ENCODE measurements at regions of chr22 and their contacts with region 1.

Region 1: GRCh38 chr22:28112548-28113043 is 193.5 kb upstream of the PITPNB start:
- DNase-seq: peak; percentile 31
- H3K4me3 ChIP-seq: no peak overlapping the region
- H3K27ac ChIP-seq: no peak overlapping the region
- H3K4me1 ChIP-seq: no peaks in the 10 kb centered on the region
- H3K27me3 ChIP-seq: no peaks in the 10 kb centered on the region
- CTCF ChIP-seq: peak; percentile 38 to 42
- POLR2A ChIP-seq: no peak

Region 2: DNA sequence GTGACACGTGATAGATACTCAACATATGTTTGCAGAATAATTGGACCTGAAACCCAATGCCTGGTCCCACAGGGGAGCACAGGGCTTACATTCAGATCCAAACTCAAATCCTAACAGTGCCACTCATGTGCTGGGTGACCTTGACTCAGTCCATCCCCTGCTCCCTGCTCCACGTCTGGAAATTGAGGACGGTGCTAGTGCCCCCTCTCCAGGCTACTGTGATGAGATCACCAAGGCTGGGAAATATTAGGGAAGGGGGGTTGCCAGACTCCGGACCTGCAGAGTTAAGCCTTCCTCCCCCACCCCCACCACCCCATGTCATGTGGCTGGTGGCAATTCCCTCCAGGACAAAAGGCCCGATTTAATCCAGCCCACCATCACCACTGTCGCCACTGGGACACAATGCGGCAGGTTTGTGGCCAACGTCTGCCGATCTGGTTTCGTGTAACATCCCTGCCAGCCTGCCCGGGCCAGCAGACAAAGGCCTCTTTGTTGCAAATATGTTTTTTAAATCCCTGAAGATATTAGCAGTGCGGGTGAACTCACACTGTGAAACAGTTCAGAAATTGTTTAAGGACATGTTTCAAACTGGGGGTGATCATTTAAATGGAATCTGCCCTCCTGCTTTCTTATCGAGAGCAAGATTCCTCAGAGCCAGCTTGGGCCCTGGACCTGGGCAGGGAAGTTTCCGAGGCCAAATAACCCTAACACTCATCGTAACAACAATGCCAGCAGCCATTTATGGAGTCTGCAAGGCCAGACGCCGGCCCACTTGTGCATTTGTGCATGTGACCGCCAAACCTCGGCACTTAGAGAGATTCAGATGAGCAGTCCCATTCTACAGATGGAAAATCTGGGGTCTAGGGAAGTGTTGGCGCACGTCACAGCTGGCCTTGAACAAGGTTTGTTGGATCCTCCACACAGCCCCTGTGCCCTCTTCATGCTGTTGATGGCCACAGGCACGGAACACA is 291.4 kb before region 1 on chr22:
- CTCF ChIA-PET with region 1: no interaction called
- POLR2A ChIA-PET with region 1: no interaction called
- dilution Hi-C with region 1: no loop called
- intact Hi-C with region 1: no loop called
- DNase-seq: no peak
- H3K4me3 ChIP-seq: no peak overlapping the region
- H3K27ac ChIP-seq: no peak overlapping the region
- H3K4me1 ChIP-seq: no peaks in the 10 kb centered on the region
- H3K27me3 ChIP-seq: no peaks in the 10 kb centered on the region
- CTCF ChIP-seq: no peak
- POLR2A ChIP-seq: no peak

Region 3: GRCh38 chr22:28019881-28020871 is 92.4 kb before region 1 on chr22:
- CTCF ChIA-PET with region 1: interaction called, 27 read pairs
- POLR2A ChIA-PET with region 1: no interaction called
- dilution Hi-C with region 1: no loop called
- intact Hi-C with region 1: loop called (anchors 10 kb)
- DNase-seq: peak; percentile 52
- H3K4me3 ChIP-seq: no peak overlapping the region
- H3K27ac ChIP-seq: no peak overlapping the region
- H3K4me1 ChIP-seq: peaks cover 9% of the 10 kb centered on the region
- H3K27me3 ChIP-seq: no peaks in the 10 kb centered on the region
- CTCF ChIP-seq: peak; percentile 95 to 98
- POLR2A ChIP-seq: no peak

Region 4: DNA sequence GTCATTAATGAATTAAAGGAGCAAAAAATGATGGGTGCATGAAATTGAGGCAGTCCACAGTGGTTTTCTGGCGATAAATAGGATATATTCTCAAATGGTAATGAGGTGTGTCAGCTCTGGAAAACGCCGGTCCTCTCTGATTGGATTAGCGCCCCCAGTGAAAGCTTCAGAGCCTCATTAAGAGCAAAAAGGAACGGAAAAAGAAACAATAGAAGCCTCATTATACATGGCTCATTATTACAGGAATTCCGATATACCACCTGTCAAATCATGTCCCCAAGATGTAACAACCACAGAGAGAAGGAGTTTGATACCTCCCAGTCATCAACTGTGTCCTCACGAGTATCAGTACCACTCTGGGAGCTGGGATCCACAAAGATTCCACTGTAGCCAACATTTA is 17.8 kb before region 1 on chr22:
- CTCF ChIA-PET with region 1: interaction called, 20 read pairs
- POLR2A ChIA-PET with region 1: no interaction called
- dilution Hi-C with region 1: no loop called
- intact Hi-C with region 1: no loop called
- DNase-seq: no peak
- H3K4me3 ChIP-seq: no peak overlapping the region
- H3K27ac ChIP-seq: no peak overlapping the region
- H3K4me1 ChIP-seq: no peaks in the 10 kb centered on the region
- H3K27me3 ChIP-seq: no peaks in the 10 kb centered on the region
- CTCF ChIP-seq: no peak
- POLR2A ChIP-seq: no peak

Region 5: DNA sequence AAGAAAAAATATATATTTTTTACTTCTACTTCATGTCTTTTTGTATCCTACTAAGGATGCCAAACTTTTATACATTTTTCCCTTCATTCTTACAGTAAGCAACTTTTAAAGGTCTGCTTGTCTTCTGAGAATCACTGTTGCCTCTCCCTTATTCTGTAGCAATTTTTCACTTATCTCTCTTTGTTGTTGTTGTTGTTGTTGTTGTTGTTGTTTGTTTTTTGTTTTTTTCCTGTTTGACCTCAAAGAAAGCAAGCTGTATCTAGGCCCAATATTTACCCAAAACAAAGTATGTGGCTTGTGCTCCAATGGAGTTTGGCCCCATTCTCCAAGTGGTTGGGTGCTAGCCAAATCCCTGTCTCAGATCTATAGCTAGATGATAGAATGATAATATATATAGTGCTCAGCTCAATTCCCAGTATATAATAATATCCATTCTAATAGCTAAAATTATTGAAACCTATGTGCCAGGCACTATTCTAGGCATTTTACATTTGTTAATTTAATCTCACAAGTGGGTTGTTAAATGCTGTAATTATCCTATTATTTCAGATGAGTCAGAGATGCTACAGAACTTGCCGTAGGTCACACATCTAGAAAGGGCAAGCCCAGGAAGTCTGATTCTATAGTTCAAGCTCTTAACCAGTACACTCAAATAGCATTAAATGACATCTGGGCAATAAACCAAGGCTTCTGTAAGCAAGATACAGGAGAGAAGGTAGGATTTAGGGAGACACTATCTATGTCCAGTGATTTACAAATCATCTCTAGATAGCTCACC is 11.6 kb after region 1 on chr22:
- CTCF ChIA-PET with region 1: interaction called, 25 read pairs
- POLR2A ChIA-PET with region 1: no interaction called
- dilution Hi-C with region 1: no loop called
- intact Hi-C with region 1: no loop called
- DNase-seq: no peak
- H3K4me3 ChIP-seq: no peak overlapping the region
- H3K27ac ChIP-seq: no peak overlapping the region
- H3K4me1 ChIP-seq: no peaks in the 10 kb centered on the region
- H3K27me3 ChIP-seq: no peaks in the 10 kb centered on the region
- CTCF ChIP-seq: no peak
- POLR2A ChIP-seq: no peak

Region 6: GRCh38 chr22:28247667-28248363 is 135.2 kb after region 1 on chr22:
- CTCF ChIA-PET with region 1: interaction called, 11 read pairs
- POLR2A ChIA-PET with region 1: no interaction called
- dilution Hi-C with region 1: no loop called
- intact Hi-C with region 1: no loop called
- DNase-seq: no peak
- H3K4me3 ChIP-seq: no peak overlapping the region
- H3K27ac ChIP-seq: no peak overlapping the region
- H3K4me1 ChIP-seq: no peaks in the 10 kb centered on the region
- H3K27me3 ChIP-seq: no peaks in the 10 kb centered on the region
- CTCF ChIP-seq: no peak
- POLR2A ChIP-seq: no peak